ENCODE measurements at regions of chr15 and their contacts with region 1.

Region 1: GRCh38 chr15:29278436-29279105 is 8.9 kb upstream of the NSMCE3 start:
- DNase-seq: peak; percentile 83
- ATAC-seq: peak; percentile 84
- H3K4me3 ChIP-seq: no peak overlapping the region
- H3K27ac ChIP-seq: peak overlapping the region; percentile 25; the same call in 1 of the 2 replicates
- H3K4me1 ChIP-seq: peaks cover 13% of the 10 kb centered on the region
- H3K27me3 ChIP-seq: 0 out of 2 replicates have a peak, but pooled peaks cover 5% of the 10 kb centered on the region
- CTCF ChIP-seq: no peak

Region 2: DNA sequence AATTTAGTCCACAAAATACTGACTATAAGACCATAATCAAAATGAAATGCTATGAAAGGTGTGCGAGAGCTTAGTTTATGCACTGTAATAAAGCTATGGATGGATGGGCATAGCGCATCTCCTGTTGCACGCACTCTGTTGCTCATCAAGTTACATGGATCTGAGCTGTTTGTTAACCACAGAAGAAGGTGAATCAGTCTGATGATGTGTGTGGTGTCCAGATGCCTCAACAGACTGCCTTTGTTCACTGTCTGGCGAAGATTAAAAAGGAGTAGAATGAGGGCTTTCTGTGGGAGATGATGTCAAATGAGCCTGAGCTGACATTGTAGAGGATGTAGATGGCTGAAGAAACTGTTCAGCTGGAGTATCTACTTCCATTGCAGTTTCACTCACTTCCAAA is 45.0 kb before region 1 on chr15:
- CTCF ChIA-PET with region 1: no interaction called
- POLR2A ChIA-PET with region 1: interaction called, 16 read pairs
- intact Hi-C with region 1: no loop called
- DNase-seq: peak; percentile 45
- ATAC-seq: no peak
- H3K4me3 ChIP-seq: no peak overlapping the region
- H3K27ac ChIP-seq: no peak overlapping the region
- H3K4me1 ChIP-seq: no peaks in the 10 kb centered on the region
- H3K27me3 ChIP-seq: peaks cover 54% of the 10 kb centered on the region
- CTCF ChIP-seq: no peak

Region 3: DNA sequence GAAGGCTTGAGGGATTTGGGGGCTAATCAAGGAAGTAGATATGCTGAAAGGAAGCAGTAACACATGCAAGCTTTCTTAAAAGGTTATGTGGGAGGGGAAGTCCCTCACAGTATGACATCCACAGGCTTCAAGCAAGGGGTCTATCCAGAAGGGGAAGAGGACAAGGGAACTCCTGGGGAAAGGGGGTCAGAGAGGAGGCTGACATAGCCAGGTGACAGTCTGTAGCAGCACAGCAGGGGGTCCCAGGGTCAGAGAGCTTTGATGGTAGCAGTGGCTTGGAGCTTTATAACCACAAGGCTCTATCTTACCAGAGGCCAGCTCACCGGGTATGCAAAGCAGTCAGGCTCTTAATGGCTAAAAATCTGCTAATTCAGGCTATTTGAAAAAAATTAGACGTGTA is 141.6 kb after region 1 on chr15:
- CTCF ChIA-PET with region 1: no interaction called
- POLR2A ChIA-PET with region 1: no interaction called
- intact Hi-C with region 1: no loop called
- DNase-seq: no peak
- ATAC-seq: no peak
- H3K4me3 ChIP-seq: no peak overlapping the region
- H3K27ac ChIP-seq: no peak overlapping the region
- H3K4me1 ChIP-seq: no peaks in the 10 kb centered on the region
- H3K27me3 ChIP-seq: peaks cover 35% of the 10 kb centered on the region
- CTCF ChIP-seq: no peak